GM13977 (cell line): ENCODE measurements at regions of chr19 and their contacts with region 1.

Region 1: GRCh38 chr19:39671738-39672363 is 16.1 kb downstream of the LGALS16 start:
- DNase-seq: peak; percentile 45
- CTCF ChIP-seq: peak; percentile 63

Region 2: DNA sequence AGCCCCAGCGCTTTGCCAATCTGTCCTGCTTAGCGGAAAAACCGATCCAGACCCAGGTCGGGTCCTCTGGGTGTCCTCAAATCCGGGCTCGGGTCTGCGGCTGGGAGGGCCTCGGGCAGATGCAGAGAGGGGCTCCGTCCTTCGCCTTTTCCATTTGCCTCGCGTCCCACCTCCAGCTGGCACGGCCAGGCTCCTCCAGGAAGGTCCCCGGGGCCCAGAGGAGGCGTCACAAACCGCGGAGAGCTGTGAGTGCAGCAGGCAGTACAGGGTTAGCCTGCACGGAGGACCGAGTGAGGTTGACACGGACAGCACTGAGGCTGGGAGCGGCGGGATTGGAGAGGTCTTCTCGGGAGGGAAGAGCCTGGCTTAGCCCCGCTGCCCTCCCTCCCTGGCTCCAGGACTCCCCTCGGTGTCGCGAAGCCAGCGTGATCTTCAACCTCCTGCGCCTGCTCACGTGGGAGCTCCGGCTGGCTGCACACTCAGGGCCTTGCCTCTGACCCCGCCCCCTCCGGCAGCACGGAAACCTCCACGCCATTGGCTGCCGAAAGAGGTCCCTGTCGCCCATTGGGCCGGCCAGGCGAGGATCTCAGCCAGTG is 406.4 kb before region 1 on chr19:
- in situ Hi-C with region 1: no loop called
- DNase-seq: no peak
- CTCF ChIP-seq: no peak

Region 3: GRCh38 chr19:39792999-39793546 is 121.2 kb after region 1 on chr19:
- in situ Hi-C with region 1: loop called (anchors 10 kb)
- DNase-seq: peak; percentile 83
- CTCF ChIP-seq: peak; percentile 92